ENCODE measurements at regions of chr14 and their contacts with region 1.

Region 1: GRCh38 chr14:22556990-22557623 is 31.9 kb downstream of the DAD1 start:
- DNase-seq: peak; percentile 96
- ATAC-seq: peak; percentile 10
- H3K4me3 Mint-ChIP-seq: peak overlapping the region; percentile 76
- H3K27ac Mint-ChIP-seq: peak overlapping the region; percentile 100
- H3K4me1 Mint-ChIP-seq: peaks cover 86% of the 10 kb centered on the region
- H3K27me3 Mint-ChIP-seq: no peaks in the 10 kb centered on the region

Region 2: DNA sequence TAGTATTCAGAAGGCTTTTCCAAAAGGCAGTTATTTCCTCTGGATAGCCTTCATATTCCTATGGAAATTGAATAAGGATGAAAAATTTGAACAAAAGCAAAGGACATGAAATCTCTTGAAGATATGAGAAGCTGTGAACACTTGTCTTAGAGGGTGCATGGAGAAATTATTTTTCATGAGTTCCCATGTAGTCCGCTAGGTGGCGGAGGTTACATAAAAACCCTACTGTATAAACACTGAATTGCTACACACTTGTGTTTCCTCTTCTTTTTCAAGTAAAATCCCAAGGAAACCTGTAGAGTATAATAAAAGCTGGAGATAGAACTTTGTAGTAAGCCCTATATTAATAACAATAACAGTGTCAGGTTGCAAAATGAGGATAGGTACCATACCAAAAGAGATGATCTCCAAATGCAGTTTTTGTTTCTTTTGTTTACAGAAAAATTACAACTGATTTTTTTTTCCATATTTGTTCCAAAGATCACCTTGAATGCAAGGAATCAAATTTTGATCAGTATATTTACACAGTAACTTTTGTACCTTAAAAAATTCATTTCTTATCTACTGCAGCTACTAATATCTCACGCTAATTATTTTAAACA is 845.6 kb before region 1 on chr14:
- CTCF ChIA-PET with region 1: no interaction called
- POLR2A ChIA-PET with region 1: no interaction called
- intact Hi-C with region 1: loop called in 1 of 2 experiments (anchors 10 kb)
- DNase-seq: peak; percentile 37
- ATAC-seq: peak; percentile 47
- H3K4me3 Mint-ChIP-seq: peak overlapping the region; percentile 60
- H3K27ac Mint-ChIP-seq: no peak overlapping the region
- H3K4me1 Mint-ChIP-seq: peaks cover 3% of the 10 kb centered on the region
- H3K27me3 Mint-ChIP-seq: peaks cover 23% of the 10 kb centered on the region

Region 3: GRCh38 chr14:21978184-21978998 is 578.7 kb before region 1 on chr14:
- CTCF ChIA-PET with region 1: interaction called, 10 read pairs
- POLR2A ChIA-PET with region 1: no interaction called
- intact Hi-C with region 1: no loop called
- DNase-seq: peak; percentile 78
- ATAC-seq: peak; percentile 79
- H3K4me3 Mint-ChIP-seq: peak overlapping the region; percentile 70
- H3K27ac Mint-ChIP-seq: peak overlapping the region; percentile 78
- H3K4me1 Mint-ChIP-seq: peaks cover 15% of the 10 kb centered on the region
- H3K27me3 Mint-ChIP-seq: no peaks in the 10 kb centered on the region

Region 4: DNA sequence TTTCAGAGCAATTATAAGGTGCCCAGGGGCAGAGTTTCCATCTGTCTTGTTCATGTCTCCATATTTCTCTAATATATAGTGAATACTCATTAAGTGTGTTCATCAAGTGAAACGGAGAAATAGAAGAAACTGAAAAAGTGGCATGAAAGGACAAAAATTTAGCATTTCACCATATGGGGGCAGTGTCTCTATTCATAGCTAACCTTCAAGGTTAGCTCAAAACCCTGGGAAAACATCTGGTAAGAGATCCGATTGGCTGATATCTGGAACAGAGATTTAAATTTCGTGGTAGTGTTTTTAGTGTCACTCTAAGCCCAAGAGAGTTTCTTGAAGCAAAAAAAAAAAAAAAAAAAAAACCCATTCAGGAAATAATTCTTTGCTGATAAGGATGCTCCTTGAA is 335.6 kb before region 1 on chr14:
- CTCF ChIA-PET with region 1: interaction called, 4 read pairs
- POLR2A ChIA-PET with region 1: no interaction called
- intact Hi-C with region 1: loop called (anchors 5 to 10 kb)
- DNase-seq: no peak
- ATAC-seq: no peak
- H3K4me3 Mint-ChIP-seq: peak overlapping the region; percentile 58
- H3K27ac Mint-ChIP-seq: peak overlapping the region; percentile 51
- H3K4me1 Mint-ChIP-seq: peaks cover 14% of the 10 kb centered on the region
- H3K27me3 Mint-ChIP-seq: no peaks in the 10 kb centered on the region

Region 5: GRCh38 chr14:22432348-22432976 is 124.6 kb before region 1 on chr14:
- CTCF ChIA-PET with region 1: no interaction called
- POLR2A ChIA-PET with region 1: no interaction called
- intact Hi-C with region 1: no loop called
- DNase-seq: no peak
- ATAC-seq: no peak
- H3K4me3 Mint-ChIP-seq: no peak overlapping the region
- H3K27ac Mint-ChIP-seq: no peak overlapping the region
- H3K4me1 Mint-ChIP-seq: no peaks in the 10 kb centered on the region
- H3K27me3 Mint-ChIP-seq: no peaks in the 10 kb centered on the region

Region 6: DNA sequence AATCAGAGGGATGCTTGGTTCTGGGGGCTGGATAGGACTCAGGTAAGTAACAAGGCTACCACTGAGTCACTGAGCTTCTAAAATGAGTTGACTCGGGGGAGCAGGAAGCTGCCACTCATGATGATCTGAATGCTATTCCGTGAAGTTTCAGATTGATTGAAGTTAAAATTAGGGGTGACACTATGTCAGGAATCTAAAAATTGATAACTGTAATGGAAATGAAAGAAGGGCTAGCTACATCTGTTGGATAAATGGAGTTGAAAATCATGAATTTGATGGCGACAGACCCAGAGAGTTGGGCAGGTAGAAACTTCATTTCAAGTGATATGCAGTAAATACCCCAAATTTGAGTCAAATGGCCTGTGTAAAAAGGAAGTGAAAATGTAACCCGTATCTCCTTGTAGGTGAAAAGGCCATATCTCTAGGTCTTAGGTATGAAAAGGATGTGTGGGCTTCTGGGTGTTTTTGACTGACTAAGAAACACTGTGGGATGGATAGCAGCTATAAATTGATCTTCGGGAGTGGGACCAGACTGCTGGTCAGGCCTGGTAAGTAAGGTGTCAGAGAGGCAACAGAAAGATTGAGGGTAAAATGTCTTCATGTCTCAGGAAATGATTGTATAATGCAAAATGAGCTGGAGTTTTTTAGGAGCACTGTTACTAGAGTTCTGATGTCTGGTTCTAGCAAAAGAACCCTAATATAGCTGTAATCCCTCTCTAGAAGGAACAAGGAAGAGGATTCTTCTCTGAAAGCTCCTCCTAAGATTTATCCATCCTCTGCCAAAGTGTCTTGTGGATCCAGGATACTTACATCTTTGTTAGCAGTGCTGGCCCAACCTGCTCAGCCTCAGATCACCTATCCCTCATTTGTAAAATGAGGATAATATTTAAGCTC is 25.4 kb before region 1 on chr14:
- CTCF ChIA-PET with region 1: interaction called, 39 read pairs
- POLR2A ChIA-PET with region 1: interaction called, 29 read pairs
- intact Hi-C with region 1: loop called in 1 of 2 experiments (anchors 1 kb)
- DNase-seq: peak; percentile 60
- ATAC-seq: peak; percentile 70
- H3K4me3 Mint-ChIP-seq: peak overlapping the region; percentile 84
- H3K27ac Mint-ChIP-seq: peak overlapping the region; percentile 100
- H3K4me1 Mint-ChIP-seq: peaks cover 87% of the 10 kb centered on the region
- H3K27me3 Mint-ChIP-seq: no peaks in the 10 kb centered on the region

Region 7: DNA sequence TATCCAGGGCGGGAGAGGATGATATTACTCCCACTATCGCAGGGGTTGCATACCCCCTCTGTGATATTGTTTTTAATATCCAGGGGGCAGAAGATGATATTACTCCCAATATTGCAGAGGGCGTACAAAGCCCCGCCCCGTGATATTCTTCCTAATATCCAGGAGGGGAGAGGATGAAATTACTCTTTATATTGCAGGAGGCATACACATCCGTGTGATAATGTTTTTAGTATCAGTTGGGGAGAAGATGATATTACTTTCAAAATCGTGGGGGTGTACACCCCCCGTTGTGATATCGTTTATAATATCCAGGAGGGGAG is 156.5 kb after region 1 on chr14:
- CTCF ChIA-PET with region 1: interaction called, 3 read pairs
- POLR2A ChIA-PET with region 1: no interaction called
- intact Hi-C with region 1: loop called (anchors 1 to 5 kb)
- DNase-seq: no peak
- ATAC-seq: no peak
- H3K4me3 Mint-ChIP-seq: peak overlapping the region; percentile 77
- H3K27ac Mint-ChIP-seq: peak overlapping the region; percentile 86
- H3K4me1 Mint-ChIP-seq: peaks cover 8% of the 10 kb centered on the region
- H3K27me3 Mint-ChIP-seq: peaks cover 14% of the 10 kb centered on the region

Region 8: GRCh38 chr14:22872033-22872832 is 315.1 kb after region 1 on chr14:
- CTCF ChIA-PET with region 1: interaction called, 6 read pairs
- POLR2A ChIA-PET with region 1: no interaction called
- intact Hi-C with region 1: loop called in 1 of 2 experiments (anchors 1 kb)
- DNase-seq: peak; percentile 84
- ATAC-seq: peak; percentile 13
- H3K4me3 Mint-ChIP-seq: peak overlapping the region; percentile 88
- H3K27ac Mint-ChIP-seq: peak overlapping the region; percentile 91
- H3K4me1 Mint-ChIP-seq: peaks cover 37% of the 10 kb centered on the region
- H3K27me3 Mint-ChIP-seq: no peaks in the 10 kb centered on the region

Measured in activated CD4-positive, alpha-beta T cell treated with anti-CD3 and anti-CD28 coated beads for 36 hours (primary cell).